ENCODE measurements at regions of chr22 and their contacts with region 1.

Region 1: GRCh38 chr22:31230871-31231621 is 18.9 kb downstream of the LIMK2 start:
- DNase-seq: peak; percentile 30
- ATAC-seq: peak; percentile 80
- H3K4me3 ChIP-seq: no peak overlapping the region
- H3K27ac ChIP-seq: no peak overlapping the region
- H3K4me1 ChIP-seq: peaks cover 4% of the 10 kb centered on the region
- H3K27me3 ChIP-seq: no peaks in the 10 kb centered on the region
- CTCF ChIP-seq: peak; percentile 64

Region 2: DNA sequence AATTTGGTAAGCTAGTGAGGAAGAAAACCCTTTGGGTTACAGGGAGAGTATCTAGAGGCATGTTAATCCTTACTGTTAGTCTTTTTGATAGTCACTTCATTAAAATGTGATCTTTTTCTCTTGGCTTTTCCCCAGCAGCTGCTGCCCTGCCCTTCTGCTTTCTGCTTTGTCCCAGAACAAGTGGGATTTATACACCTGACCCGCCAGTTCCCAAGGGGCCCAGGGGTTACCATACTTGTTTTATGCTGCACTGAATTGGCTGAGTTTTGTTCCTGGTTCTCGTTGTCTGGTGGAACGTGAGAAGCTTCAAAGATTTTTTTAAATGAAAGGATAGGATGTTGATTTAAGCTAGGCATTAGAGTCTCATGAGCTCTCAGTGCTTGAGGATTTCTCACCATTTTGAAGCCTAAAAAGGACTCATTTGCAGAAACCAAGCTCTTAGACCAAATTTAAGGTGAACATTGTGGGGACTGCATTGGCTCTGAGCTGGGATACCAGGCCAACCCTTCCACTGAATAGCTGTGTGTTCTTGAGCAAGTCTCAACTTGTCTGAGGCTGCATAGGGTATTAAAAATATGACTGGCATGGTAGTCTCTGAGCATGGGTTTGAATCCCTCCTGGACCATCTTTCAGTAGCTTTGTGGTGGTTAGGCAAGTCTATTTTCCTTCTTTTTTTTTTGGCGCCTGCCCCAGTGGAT is 12.3 kb before region 1 on chr22:
- CTCF ChIA-PET with region 1: no interaction called
- POLR2A ChIA-PET with region 1: no interaction called
- in situ Hi-C with region 1: no loop called
- intact Hi-C with region 1: no loop called
- DNase-seq: no peak
- ATAC-seq: no peak
- H3K4me3 ChIP-seq: no peak overlapping the region
- H3K27ac ChIP-seq: no peak overlapping the region
- H3K4me1 ChIP-seq: peaks cover 12% of the 10 kb centered on the region; the same call in 1 of the 2 replicates
- H3K27me3 ChIP-seq: no peaks in the 10 kb centered on the region
- CTCF ChIP-seq: no peak

Region 3: GRCh38 chr22:31249389-31249906 is 18.4 kb after region 1 on chr22:
- CTCF ChIA-PET with region 1: no interaction called
- POLR2A ChIA-PET with region 1: interaction called, 21 read pairs
- in situ Hi-C with region 1: no loop called
- intact Hi-C with region 1: no loop called
- DNase-seq: no peak
- ATAC-seq: no peak
- H3K4me3 ChIP-seq: peak overlapping the region in 1 of 2 experiments; percentile 35; a peak in 1 of 4 replicates
- H3K27ac ChIP-seq: no peak overlapping the region
- H3K4me1 ChIP-seq: peaks cover 4% of the 10 kb centered on the region
- H3K27me3 ChIP-seq: no peaks in the 10 kb centered on the region
- CTCF ChIP-seq: no peak